Mammary epithelial cell (primary cell): ENCODE measurements at regions of chr2 and their contacts with region 1.

Region 1: GRCh38 chr2:234178330-234179030 is 128.0 kb downstream of the SPP2 start:
- DNase-seq: peak; percentile 49
- H3K4me3 ChIP-seq: no peak overlapping the region
- H3K27ac ChIP-seq: no peak overlapping the region
- H3K4me1 ChIP-seq: no peaks in the 10 kb centered on the region
- H3K27me3 ChIP-seq: no peaks in the 10 kb centered on the region
- CTCF ChIP-seq: no peak

Region 2: GRCh38 chr2:234231460-234231859 is 53.0 kb after region 1 on chr2:
- CTCF ChIA-PET with region 1: no interaction called
- dilution Hi-C with region 1: no loop called
- in situ Hi-C with region 1: no loop called
- intact Hi-C with region 1: loop called (anchors 1 kb)
- DNase-seq: no peak
- H3K4me3 ChIP-seq: no peak overlapping the region
- H3K27ac ChIP-seq: no peak overlapping the region
- H3K4me1 ChIP-seq: no peaks in the 10 kb centered on the region
- H3K27me3 ChIP-seq: no peaks in the 10 kb centered on the region
- CTCF ChIP-seq: no peak

Region 3: GRCh38 chr2:234304945-234305344 is 126.5 kb after region 1 on chr2:
- CTCF ChIA-PET with region 1: no interaction called
- dilution Hi-C with region 1: no loop called
- in situ Hi-C with region 1: no loop called
- intact Hi-C with region 1: no loop called
- DNase-seq: peak; percentile 54
- H3K4me3 ChIP-seq: no peak overlapping the region
- H3K27ac ChIP-seq: peak overlapping the region; percentile 89
- H3K4me1 ChIP-seq: peaks cover 34% of the 10 kb centered on the region
- H3K27me3 ChIP-seq: no peaks in the 10 kb centered on the region
- CTCF ChIP-seq: no peak